ENCODE measurements at regions of chr16 and their contacts with region 1.

Region 1: GRCh38 chr16:19555162-19555937 is at the start of gene VPS35L:
- DNase-seq: peak; percentile 98
- ATAC-seq: peak; percentile 89
- H3K4me3 Mint-ChIP-seq: peak within 1 kb of the TSS; percentile 94
- H3K27ac Mint-ChIP-seq: peak within 1 kb of the TSS; percentile 98
- H3K4me1 Mint-ChIP-seq: peaks cover 20% of the 10 kb centered on the region
- H3K27me3 Mint-ChIP-seq: no peaks in the 10 kb centered on the region
- CTCF ChIP-seq: peak; percentile 27; the same call in 1 of the 2 replicates
- total RNA-seq, gene VPS35L: 59.7 to 71.7 TPM (median 65.5 TPM) in 3 replicates

Region 2: DNA sequence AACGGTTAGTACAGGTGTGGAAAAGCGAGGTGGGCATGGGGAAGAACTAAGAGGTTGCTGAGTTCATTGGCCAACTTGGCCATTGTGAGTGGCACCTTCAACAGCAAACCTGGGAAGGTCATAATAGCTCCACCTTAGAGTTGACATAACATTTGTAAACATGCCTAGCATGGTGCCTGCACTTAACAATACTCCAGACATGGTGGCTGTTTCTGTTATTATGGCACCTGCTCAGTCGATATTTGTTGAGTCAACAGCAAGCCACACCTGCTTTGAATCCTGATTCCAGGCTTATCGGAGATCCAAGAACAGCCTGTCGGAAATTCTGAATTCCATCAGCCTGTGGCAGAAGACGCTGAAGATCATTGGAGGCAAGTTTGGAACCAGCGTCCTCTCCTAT is 91.9 kb before region 1 on chr16:
- CTCF ChIA-PET with region 1: no interaction called
- POLR2A ChIA-PET with region 1: no interaction called
- DNase-seq: no peak
- ATAC-seq: no peak
- H3K4me3 Mint-ChIP-seq: no peak overlapping the region
- H3K27ac Mint-ChIP-seq: 0 out of 2 replicates have a peak overlapping the region, but pooled peaks have one; percentile 22
- H3K4me1 Mint-ChIP-seq: peaks cover 7% of the 10 kb centered on the region
- H3K27me3 Mint-ChIP-seq: no peaks in the 10 kb centered on the region; the same call in 1 of the 2 replicates
- CTCF ChIP-seq: no peak

Region 3: DNA sequence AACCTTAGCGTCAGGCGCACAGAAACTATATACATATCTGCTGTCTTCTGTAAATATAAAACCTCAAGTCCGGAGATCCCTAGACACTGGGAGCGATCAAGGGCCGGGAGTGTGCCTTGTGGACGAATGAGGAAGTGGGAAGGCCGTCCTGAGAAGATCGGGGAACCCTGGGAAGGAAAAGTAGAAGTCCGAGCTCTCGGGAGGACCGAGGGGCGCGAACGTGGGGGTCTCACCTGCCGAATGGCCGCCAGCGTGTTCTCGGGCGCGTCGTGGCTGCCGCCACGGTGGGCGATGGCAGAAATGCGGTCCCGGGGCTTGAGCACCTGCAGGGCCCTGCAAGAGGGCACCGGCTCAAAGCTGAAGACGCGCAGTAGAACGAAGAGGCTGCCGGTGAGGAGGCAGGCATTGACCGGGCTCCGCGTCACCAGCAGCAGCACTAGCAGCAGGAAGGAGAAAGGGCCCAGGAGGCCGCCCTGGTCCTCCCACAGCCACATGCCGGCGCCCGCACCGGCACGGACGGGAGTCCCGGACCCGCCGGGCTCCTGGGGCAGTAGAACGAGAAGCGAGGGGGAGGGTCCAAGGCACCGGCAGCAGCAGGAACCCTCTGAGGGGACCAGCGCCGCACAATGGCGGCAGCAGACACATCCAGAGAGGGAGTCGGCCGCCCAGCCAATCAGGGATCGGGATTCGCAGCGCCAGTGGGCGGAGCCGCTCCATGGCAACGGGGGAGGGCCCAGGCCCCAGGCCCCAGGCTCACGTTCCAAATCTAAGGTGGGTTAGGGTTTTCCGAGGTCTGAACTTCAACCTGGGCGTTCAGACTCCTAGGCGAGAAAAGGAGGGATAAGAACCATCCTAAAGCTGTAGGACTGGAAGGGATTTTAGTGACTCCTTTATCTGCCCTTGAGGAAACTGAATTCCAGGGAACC is 33.6 kb before region 1 on chr16 and contains the start of gene GDE1:
- CTCF ChIA-PET with region 1: interaction called, 28 read pairs
- POLR2A ChIA-PET with region 1: interaction called, 23 read pairs
- DNase-seq: peak; percentile 98
- ATAC-seq: peak; percentile 84
- H3K4me3 Mint-ChIP-seq: peak within 1 kb of the TSS; percentile 93
- H3K27ac Mint-ChIP-seq: peak within 1 kb of the TSS; percentile 94
- H3K4me1 Mint-ChIP-seq: peaks cover 46% of the 10 kb centered on the region
- H3K27me3 Mint-ChIP-seq: no peaks in the 10 kb centered on the region
- CTCF ChIP-seq: no peak
- total RNA-seq, gene GDE1: 58.3 to 65.7 TPM (median 60.6 TPM) in 3 replicates

Region 4: GRCh38 chr16:19607616-19608280 is 52.4 kb after region 1 on chr16:
- CTCF ChIA-PET with region 1: no interaction called
- POLR2A ChIA-PET with region 1: no interaction called
- DNase-seq: no peak
- ATAC-seq: no peak
- H3K4me3 Mint-ChIP-seq: no peak overlapping the region
- H3K27ac Mint-ChIP-seq: no peak overlapping the region
- H3K4me1 Mint-ChIP-seq: no peaks in the 10 kb centered on the region
- H3K27me3 Mint-ChIP-seq: no peaks in the 10 kb centered on the region
- CTCF ChIP-seq: no peak

Region 5: DNA sequence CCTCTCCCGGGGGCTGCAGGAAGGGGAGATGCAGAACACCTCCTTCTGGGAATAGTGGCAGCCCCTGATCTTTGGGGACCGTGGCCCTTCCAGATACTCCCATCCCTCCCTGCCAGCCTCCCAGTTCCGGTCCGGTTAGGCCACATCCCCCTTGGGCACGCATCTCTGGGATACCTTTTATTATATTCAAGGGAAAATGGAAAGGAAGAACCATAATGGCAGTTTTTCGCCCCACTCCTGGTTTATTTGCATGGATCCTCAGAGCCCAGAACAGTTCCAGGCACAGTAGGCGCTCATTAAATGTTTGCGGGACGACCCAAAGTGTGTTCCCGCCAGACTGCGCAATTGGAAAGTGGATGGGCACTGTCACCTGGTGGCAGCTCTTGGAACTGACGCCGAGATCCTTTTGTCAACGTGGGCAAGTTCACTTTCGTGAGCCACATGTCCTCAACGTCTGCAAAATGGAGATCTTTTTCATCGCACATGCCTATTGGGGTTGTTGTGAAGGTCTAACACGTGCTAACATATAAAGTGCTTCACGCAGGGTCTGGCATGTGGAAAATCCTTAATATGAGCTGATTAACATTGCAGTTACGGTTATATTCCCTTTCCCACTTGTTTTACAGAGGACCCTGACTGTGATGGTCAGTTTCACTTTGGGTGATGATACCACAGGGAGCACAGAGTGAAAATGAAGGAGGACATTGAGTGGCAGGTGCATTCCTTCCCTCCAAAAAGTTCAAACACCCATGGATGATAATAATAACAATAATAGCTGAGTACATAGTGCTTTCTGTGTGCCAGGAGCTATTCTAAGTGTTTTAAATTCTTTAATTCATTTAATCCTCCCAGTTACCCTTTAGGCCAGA is 331.0 kb after region 1 on chr16:
- CTCF ChIA-PET with region 1: interaction called, 5 read pairs
- POLR2A ChIA-PET with region 1: interaction called, 14 read pairs
- DNase-seq: peak; percentile 87
- ATAC-seq: peak; percentile 8
- H3K4me3 Mint-ChIP-seq: peak overlapping the region; percentile 74
- H3K27ac Mint-ChIP-seq: no peak overlapping the region; the same call in 1 of the 2 replicates
- H3K4me1 Mint-ChIP-seq: peaks cover 31% of the 10 kb centered on the region
- H3K27me3 Mint-ChIP-seq: peaks cover 19% of the 10 kb centered on the region
- CTCF ChIP-seq: peak; percentile 97

Measured in WTC11 (cell line).